Dendritic cell treated with granulocyte-macrophage colony-stimulating factor and Interleukin-4, amounts not matched to agents 40 ng/mL and 50 ng/mL, for 4 days (primary cell): ENCODE measurements at regions of chr19 and their contacts with region 1.

Region 1: DNA sequence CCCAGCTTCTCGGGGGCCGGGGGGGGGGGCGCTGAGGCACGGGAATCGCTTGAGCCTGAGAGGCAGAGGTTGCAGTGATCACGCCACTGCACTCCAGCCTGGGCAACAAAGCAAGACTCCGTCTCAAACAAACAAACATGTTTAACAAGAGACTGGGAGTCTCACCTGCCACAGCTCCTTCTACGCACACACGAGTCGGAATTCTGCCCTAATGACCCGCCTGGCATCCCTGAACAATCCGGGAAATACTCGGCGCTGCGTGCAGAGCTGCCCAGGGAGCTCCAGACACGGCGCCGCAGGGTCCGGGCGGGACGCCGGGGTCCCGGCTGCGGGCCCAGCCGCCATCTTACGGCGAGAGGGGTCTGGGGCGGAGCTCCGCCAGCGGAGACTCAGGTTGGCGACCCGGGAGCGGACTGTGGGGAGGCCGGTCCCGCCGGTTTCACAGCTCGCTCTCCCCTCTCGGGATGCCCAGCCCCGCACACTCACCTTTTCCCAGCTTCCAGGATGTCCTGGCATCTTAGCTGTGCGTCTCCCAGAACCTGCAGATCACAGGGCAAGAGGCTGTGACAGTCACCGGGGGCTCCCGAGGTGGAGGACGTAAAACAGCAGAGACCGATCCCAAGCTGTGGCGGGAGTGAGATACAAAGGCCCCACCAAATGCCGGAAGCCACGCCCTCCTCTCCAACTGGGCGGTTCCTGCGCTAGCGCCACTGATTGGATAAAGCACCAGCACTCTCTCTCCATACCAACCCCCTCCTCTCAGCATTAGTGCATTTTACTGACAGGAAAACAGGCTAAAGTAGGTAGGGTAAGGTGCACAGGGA is 23.6 kb upstream of the ZNF724 start:
- H3K4me3 Mint-ChIP-seq: peak overlapping the region; percentile 93
- H3K27ac Mint-ChIP-seq: peak overlapping the region; percentile 82
- H3K4me1 Mint-ChIP-seq: peaks cover 10% of the 10 kb centered on the region
- H3K27me3 Mint-ChIP-seq: no peaks in the 10 kb centered on the region

Region 2: GRCh38 chr19:23249911-23250649 is 23.7 kb before region 1 on chr19 and contains the start of gene ZNF724:
- intact Hi-C with region 1: loop called (anchors 2 kb)
- H3K4me3 Mint-ChIP-seq: peak within 1 kb of the TSS; percentile 94
- H3K27ac Mint-ChIP-seq: peak within 1 kb of the TSS; percentile 90
- H3K4me1 Mint-ChIP-seq: peaks cover 5% of the 10 kb centered on the region
- H3K27me3 Mint-ChIP-seq: no peaks in the 10 kb centered on the region